Activated T-helper 2 cell treated with anti-CD3 and anti-CD28 coated beads, Interferon-gamma antibody, Interleukin-2, Interleukin-4, amounts not matched to agents 10 μg/mL and 5 μg/mL and 100 μg/mL, durations not matched to agents 14 hours and 24 hours and 36 hours (primary cell): ENCODE measurements at regions of chr5 and their contacts with region 1.

Region 1: GRCh38 chr5:158875272-158875679 is 224.4 kb downstream of the EBF1 start:
- DNase-seq: no peak
- H3K4me3 Mint-ChIP-seq: no peak overlapping the region
- H3K27ac Mint-ChIP-seq: no peak overlapping the region
- H3K4me1 Mint-ChIP-seq: peaks cover 20% of the 10 kb centered on the region
- H3K27me3 Mint-ChIP-seq: peaks cover 3% of the 10 kb centered on the region

Region 2: GRCh38 chr5:158499075-158499891 is 376.0 kb before region 1 on chr5:
- intact Hi-C with region 1: no loop called
- DNase-seq: no peak
- H3K4me3 Mint-ChIP-seq: no peak overlapping the region
- H3K27ac Mint-ChIP-seq: no peak overlapping the region
- H3K4me1 Mint-ChIP-seq: no peaks in the 10 kb centered on the region
- H3K27me3 Mint-ChIP-seq: no peaks in the 10 kb centered on the region

Region 3: GRCh38 chr5:158780656-158781237 is 94.5 kb before region 1 on chr5:
- intact Hi-C with region 1: no loop called
- DNase-seq: no peak
- H3K4me3 Mint-ChIP-seq: no peak overlapping the region
- H3K27ac Mint-ChIP-seq: no peak overlapping the region
- H3K4me1 Mint-ChIP-seq: no peaks in the 10 kb centered on the region
- H3K27me3 Mint-ChIP-seq: peaks cover 6% of the 10 kb centered on the region

Region 4: GRCh38 chr5:158857976-158858375 is 17.3 kb before region 1 on chr5:
- intact Hi-C with region 1: loop called (anchors 2 kb)
- DNase-seq: no peak
- H3K4me3 Mint-ChIP-seq: no peak overlapping the region
- H3K27ac Mint-ChIP-seq: no peak overlapping the region
- H3K4me1 Mint-ChIP-seq: peaks cover 14% of the 10 kb centered on the region
- H3K27me3 Mint-ChIP-seq: peaks cover 23% of the 10 kb centered on the region

Region 5: GRCh38 chr5:159094745-159095144 is 219.5 kb after region 1 on chr5:
- intact Hi-C with region 1: no loop called
- DNase-seq: no peak
- H3K4me3 Mint-ChIP-seq: no peak overlapping the region
- H3K27ac Mint-ChIP-seq: no peak overlapping the region
- H3K4me1 Mint-ChIP-seq: peaks cover 20% of the 10 kb centered on the region
- H3K27me3 Mint-ChIP-seq: peaks cover 68% of the 10 kb centered on the region